ENCODE measurements at regions of chr16 and their contacts with region 1.

Region 1: DNA sequence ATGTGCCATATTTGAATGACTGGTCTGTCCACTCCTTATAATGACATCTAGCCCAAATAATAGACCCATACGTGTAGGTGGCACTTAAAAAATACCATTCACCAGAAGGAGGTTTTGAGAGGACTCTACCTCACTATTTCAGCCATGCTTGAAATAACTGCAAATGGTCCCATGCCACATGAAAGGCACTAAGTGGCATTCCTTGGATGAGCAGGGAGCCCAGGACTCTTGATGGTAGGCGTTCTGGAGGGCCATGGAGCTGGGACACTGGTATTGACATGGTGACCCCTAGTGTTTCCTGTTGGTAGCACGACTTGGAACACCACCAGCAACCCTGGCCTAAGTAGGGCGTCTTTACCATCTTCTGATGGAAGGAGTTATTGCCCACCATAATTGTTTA is 148.7 kb upstream of the ZFHX3 start:
- DNase-seq: no peak
- ATAC-seq: peak; percentile 37
- H3K4me3 Mint-ChIP-seq: no peak overlapping the region
- H3K27ac Mint-ChIP-seq: no peak overlapping the region
- H3K4me1 Mint-ChIP-seq: no peaks in the 10 kb centered on the region
- H3K27me3 Mint-ChIP-seq: peaks cover 2% of the 10 kb centered on the region
- CTCF ChIP-seq: no peak

Region 2: GRCh38 chr16:73159266-73159665 is 37.4 kb before region 1 on chr16:
- CTCF ChIA-PET with region 1: no interaction called
- POLR2A ChIA-PET with region 1: no interaction called
- intact Hi-C with region 1: no loop called
- DNase-seq: no peak
- ATAC-seq: no peak
- H3K4me3 Mint-ChIP-seq: no peak overlapping the region
- H3K27ac Mint-ChIP-seq: no peak overlapping the region
- H3K4me1 Mint-ChIP-seq: peaks cover 4% of the 10 kb centered on the region
- H3K27me3 Mint-ChIP-seq: peaks cover 4% of the 10 kb centered on the region
- CTCF ChIP-seq: no peak

Region 3: GRCh38 chr16:73527182-73527581 is 330.5 kb after region 1 on chr16:
- CTCF ChIA-PET with region 1: no interaction called
- POLR2A ChIA-PET with region 1: no interaction called
- intact Hi-C with region 1: no loop called
- DNase-seq: no peak
- ATAC-seq: no peak
- H3K4me3 Mint-ChIP-seq: no peak overlapping the region
- H3K27ac Mint-ChIP-seq: no peak overlapping the region
- H3K4me1 Mint-ChIP-seq: no peaks in the 10 kb centered on the region
- H3K27me3 Mint-ChIP-seq: no peaks in the 10 kb centered on the region
- CTCF ChIP-seq: no peak

Region 4: GRCh38 chr16:73956587-73957494 is 760.2 kb after region 1 on chr16:
- CTCF ChIA-PET with region 1: no interaction called
- POLR2A ChIA-PET with region 1: no interaction called
- intact Hi-C with region 1: loop called (anchors 5 kb)
- DNase-seq: no peak
- ATAC-seq: no peak
- H3K4me3 Mint-ChIP-seq: no peak overlapping the region
- H3K27ac Mint-ChIP-seq: no peak overlapping the region
- H3K4me1 Mint-ChIP-seq: no peaks in the 10 kb centered on the region
- H3K27me3 Mint-ChIP-seq: no peaks in the 10 kb centered on the region
- CTCF ChIP-seq: peak; percentile 44